ENCODE measurements at regions of chr12 and their contacts with region 1.

Region 1: DNA sequence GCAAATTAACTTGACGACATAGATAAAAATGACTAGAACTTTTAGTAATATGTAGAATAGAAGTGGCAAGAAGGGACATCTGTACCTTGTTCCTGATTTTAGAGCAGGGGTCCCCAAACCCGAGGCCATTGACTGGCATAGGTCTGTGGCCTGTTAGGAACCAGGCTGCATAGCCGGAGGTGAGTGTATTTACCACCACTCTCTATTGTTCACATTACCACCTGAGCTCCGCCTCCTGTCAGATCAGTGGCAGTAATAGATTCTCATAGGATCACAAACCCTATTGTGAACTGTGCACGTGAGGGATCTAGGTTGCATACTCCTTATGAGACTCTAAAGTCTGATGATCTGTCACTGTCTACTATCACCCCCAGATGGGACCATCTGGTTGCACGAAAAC is 113.6 kb upstream of the AVPR1A start:
- DNase-seq: no peak
- H3K4me3 ChIP-seq: no peak overlapping the region
- H3K27ac ChIP-seq: no peak overlapping the region
- H3K4me1 ChIP-seq: no peaks in the 10 kb centered on the region
- H3K27me3 ChIP-seq: peaks cover 0 to 1% (median 0%) of the 10 kb centered on the region in 4 experiments; a peak in 1 of 7 replicates
- CTCF ChIP-seq: no peak
- EP300 ChIP-seq: no peak
- POLR2A ChIP-seq: no peak
- RAD21 ChIP-seq: no peak

Region 2: GRCh38 chr12:62659453-62660295 is 605.0 kb before region 1 on chr12:
- CTCF ChIA-PET with region 1: no interaction called
- POLR2A ChIA-PET with region 1: no interaction called
- DNase-seq: peak; percentile 53 to 56
- H3K4me3 ChIP-seq: peak overlapping the region in 3 of 4 experiments; percentile 20 to 43 (median 32); a peak in 5 of 8 replicates
- H3K27ac ChIP-seq: peak overlapping the region; percentile 88
- H3K4me1 ChIP-seq: peaks cover 31 to 52% (median 43%) of the 10 kb centered on the region in 4 experiments
- H3K27me3 ChIP-seq: peaks cover 5 to 9% (median 9%) of the 10 kb centered on the region in 4 experiments
- CTCF ChIP-seq: no peak
- EP300 ChIP-seq: peak in 1 of 2 experiments; percentile 96; a peak in 2 of 3 replicates
- POLR2A ChIP-seq: peak in 1 of 2 experiments; percentile 36; a peak in 1 of 3 replicates
- RAD21 ChIP-seq: peak in 1 of 2 experiments; percentile 20; a peak in 2 of 4 replicates

Region 3: GRCh38 chr12:63021116-63021515 is 243.5 kb before region 1 on chr12:
- CTCF ChIA-PET with region 1: no interaction called
- POLR2A ChIA-PET with region 1: no interaction called
- DNase-seq: no peak
- H3K4me3 ChIP-seq: peak overlapping the region in 1 of 4 experiments; percentile 37; a peak in 2 of 8 replicates
- H3K27ac ChIP-seq: no peak overlapping the region
- H3K4me1 ChIP-seq: peaks cover 0 to 15% (median 11%) of the 10 kb centered on the region in 4 experiments; a peak in 5 of 7 replicates
- H3K27me3 ChIP-seq: no peaks in the 10 kb centered on the region
- CTCF ChIP-seq: no peak
- EP300 ChIP-seq: no peak
- POLR2A ChIP-seq: no peak
- RAD21 ChIP-seq: no peak

Region 4: DNA sequence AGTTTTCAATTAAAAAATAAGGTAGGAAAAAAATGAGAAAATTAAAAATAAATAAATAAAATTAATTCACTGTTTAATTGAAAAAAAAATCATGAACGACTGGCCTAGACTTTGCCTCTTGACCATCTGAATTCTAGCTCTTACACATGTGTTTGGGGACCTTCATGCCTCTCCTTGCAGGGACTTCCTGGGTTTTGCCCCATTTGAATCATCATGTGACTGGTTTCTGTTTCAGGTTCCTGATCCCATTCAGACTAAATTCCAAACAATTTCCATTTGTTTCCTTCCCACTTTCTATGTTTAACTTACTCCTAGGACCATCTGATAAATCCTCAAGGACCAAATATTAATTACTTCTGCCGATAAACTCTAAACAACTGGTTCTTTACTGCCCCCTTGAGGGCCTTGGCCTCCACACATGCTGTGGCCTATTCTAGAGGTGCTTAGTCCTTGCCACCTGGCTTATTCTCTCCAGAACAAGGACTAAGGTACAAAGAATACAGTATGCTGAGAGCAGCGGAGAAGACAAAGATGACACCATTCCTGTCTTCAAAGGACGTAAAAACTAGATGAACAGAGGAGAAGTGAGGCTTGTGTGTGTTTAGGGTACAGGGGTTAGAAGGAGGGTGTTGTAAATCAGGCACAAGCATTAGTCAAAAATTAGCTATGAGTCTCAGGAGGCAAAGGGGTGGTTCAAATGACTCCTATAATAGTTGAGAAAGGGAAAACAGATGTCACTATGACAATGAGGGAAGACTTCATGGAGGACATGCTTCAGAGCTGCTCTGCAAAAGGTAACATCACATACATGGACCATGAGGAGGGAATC is 12.1 kb after region 1 on chr12:
- CTCF ChIA-PET with region 1: interaction called, 11 read pairs
- POLR2A ChIA-PET with region 1: no interaction called
- DNase-seq: peak; percentile 38 to 69
- H3K4me3 ChIP-seq: no peak overlapping the region
- H3K27ac ChIP-seq: no peak overlapping the region
- H3K4me1 ChIP-seq: no peaks in the 10 kb centered on the region
- H3K27me3 ChIP-seq: no peaks in the 10 kb centered on the region
- CTCF ChIP-seq: peak; percentile 46 to 82 (median 78)
- EP300 ChIP-seq: no peak
- POLR2A ChIP-seq: no peak
- RAD21 ChIP-seq: peak; percentile 80 to 83

Region 5: GRCh38 chr12:63319336-63319735 is 54.7 kb after region 1 on chr12:
- CTCF ChIA-PET with region 1: no interaction called
- POLR2A ChIA-PET with region 1: no interaction called
- DNase-seq: no peak
- H3K4me3 ChIP-seq: no peak overlapping the region
- H3K27ac ChIP-seq: no peak overlapping the region
- H3K4me1 ChIP-seq: no peaks in the 10 kb centered on the region
- H3K27me3 ChIP-seq: no peaks in the 10 kb centered on the region
- CTCF ChIP-seq: peak in 2 of 3 experiments; percentile 32 to 41; a peak in 1 of 4 replicates
- EP300 ChIP-seq: no peak
- POLR2A ChIP-seq: no peak
- RAD21 ChIP-seq: peak; percentile 50 to 63